Sigmoid colon (tissue), 7 donors: ENCODE measurements at regions of chr7 and their contacts with region 1.

Region 1: GRCh38 chr7:131107337-131108211 is 220.1 kb upstream of the MKLN1 start:
- DNase-seq: peak; percentile 91
- H3K4me3 ChIP-seq: peak overlapping the region; percentile 78 to 99 (median 90)
- H3K27ac ChIP-seq: peak overlapping the region; percentile 95 to 100 (median 98)
- H3K4me1 ChIP-seq: peaks cover 0 to 61% (median 55%) of the 10 kb centered on the region in 4 donors
- H3K27me3 ChIP-seq: no peaks in the 10 kb centered on the region
- CTCF ChIP-seq: no peak
- EP300 ChIP-seq: peak in 1 of 4 donors; percentile 25
- POLR2A ChIP-seq: peak; percentile 67 to 80

Region 2: DNA sequence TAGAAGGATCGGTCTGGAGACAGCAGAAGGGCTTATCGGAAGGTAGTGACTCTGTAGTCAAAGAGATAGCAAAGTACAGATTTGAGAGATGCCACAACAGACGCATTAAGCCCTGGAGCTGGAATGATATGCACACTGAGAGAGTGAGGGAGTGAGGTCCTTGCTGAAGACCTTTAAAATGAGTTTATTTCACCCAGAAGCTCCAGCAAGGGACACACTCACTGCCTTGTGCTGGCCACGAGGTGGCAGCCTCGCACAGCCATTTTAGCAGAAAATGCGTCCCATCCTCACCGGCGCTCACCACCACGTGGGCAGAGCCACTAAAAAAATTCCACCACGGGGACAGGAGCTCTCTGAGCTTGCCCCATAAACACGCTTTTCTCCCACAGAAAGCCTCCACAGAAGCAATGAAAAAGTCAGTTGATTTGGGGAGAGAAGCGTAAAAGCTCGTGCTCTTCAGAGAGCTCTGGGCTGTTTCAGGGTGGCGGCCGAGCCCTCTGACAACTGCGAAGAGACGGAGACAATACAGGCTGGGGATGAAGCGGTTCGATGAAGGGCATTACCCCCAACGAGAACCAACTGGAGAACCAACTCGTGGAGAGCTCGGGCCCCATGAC is 210.6 kb before region 1 on chr7:
- intact Hi-C with region 1: loop called (anchors 5 kb)
- DNase-seq: peak; percentile 81
- H3K4me3 ChIP-seq: no peak overlapping the region
- H3K27ac ChIP-seq: peak overlapping the region in 3 of 4 donors; percentile 15 to 65 (median 17)
- H3K4me1 ChIP-seq: peaks cover 0 to 79% (median 71%) of the 10 kb centered on the region in 4 donors
- H3K27me3 ChIP-seq: no peaks in the 10 kb centered on the region
- CTCF ChIP-seq: peak; percentile 64 to 82 (median 75)
- EP300 ChIP-seq: no peak
- POLR2A ChIP-seq: no peak

Region 3: GRCh38 chr7:131071786-131072504 is 35.6 kb before region 1 on chr7:
- intact Hi-C with region 1: loop called (anchors 5 kb)
- DNase-seq: no peak
- H3K4me3 ChIP-seq: no peak overlapping the region
- H3K27ac ChIP-seq: peak overlapping the region in 3 of 4 donors; percentile 49 to 54 (median 53)
- H3K4me1 ChIP-seq: peaks cover 0 to 88% (median 59%) of the 10 kb centered on the region in 4 donors
- H3K27me3 ChIP-seq: no peaks in the 10 kb centered on the region
- CTCF ChIP-seq: peak in 2 of 4 experiments; percentile 6 to 14
- EP300 ChIP-seq: no peak
- POLR2A ChIP-seq: no peak

Region 4: GRCh38 chr7:131219312-131220041 is 111.9 kb after region 1 on chr7:
- intact Hi-C with region 1: loop called (anchors 5 kb)
- DNase-seq: peak; percentile 89
- H3K4me3 ChIP-seq: no peak overlapping the region
- H3K27ac ChIP-seq: peak overlapping the region; percentile 48 to 66 (median 59)
- H3K4me1 ChIP-seq: peaks cover 0 to 10% (median 4%) of the 10 kb centered on the region in 4 donors
- H3K27me3 ChIP-seq: no peaks in the 10 kb centered on the region
- CTCF ChIP-seq: no peak
- EP300 ChIP-seq: no peak
- POLR2A ChIP-seq: no peak

Region 5: GRCh38 chr7:131327626-131328376 is 220.2 kb after region 1 on chr7 and contains the start of gene MKLN1:
- intact Hi-C with region 1: loop called (anchors 2 kb)
- DNase-seq: peak; percentile 96
- H3K4me3 ChIP-seq: peak within 1 kb of the TSS; percentile 87 to 99 (median 94)
- H3K27ac ChIP-seq: peak within 1 kb of the TSS; percentile 97 to 100 (median 98)
- H3K4me1 ChIP-seq: peaks cover 0 to 35% (median 20%) of the 10 kb centered on the region in 4 donors
- H3K27me3 ChIP-seq: no peaks in the 10 kb centered on the region
- CTCF ChIP-seq: no peak
- EP300 ChIP-seq: peak in 2 of 4 donors; percentile 4 to 36
- POLR2A ChIP-seq: peak; percentile 54 to 70
- total RNA-seq, gene MKLN1: 48.2 to 68.1 (median 61.0) TPM

Region 6: DNA sequence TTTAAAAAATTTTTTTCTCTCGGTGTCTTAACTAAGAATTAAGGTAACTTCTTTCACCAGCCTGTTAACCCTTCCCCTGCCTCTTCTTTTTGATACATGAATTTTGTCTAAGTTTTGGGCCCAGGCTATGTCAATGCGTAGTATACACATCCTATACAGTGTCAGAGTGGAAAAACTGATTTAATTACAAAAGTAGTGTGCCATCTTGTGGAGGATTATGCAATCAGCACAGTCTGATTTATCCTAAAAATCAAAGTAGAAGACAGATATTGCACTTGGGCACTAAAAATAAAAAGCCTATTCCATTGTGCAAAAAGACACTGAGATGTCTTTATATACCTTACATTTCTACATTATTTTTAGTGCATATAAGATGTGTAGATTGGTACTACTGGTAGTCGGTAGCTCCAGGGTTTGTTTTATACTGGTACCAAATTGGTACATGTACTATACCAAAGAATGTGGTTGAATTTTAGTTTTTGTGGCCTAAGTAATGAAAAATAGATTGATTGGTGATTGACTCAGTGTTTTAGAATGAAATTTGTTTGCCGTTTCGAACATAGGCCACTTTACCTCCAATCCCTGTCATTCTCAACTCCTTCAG is 316.7 kb after region 1 on chr7:
- intact Hi-C with region 1: loop called (anchors 5 kb)
- DNase-seq: no peak
- H3K4me3 ChIP-seq: no peak overlapping the region
- H3K27ac ChIP-seq: peak overlapping the region; percentile 12 to 49 (median 14)
- H3K4me1 ChIP-seq: peaks cover 0 to 26% (median 15%) of the 10 kb centered on the region in 4 donors
- H3K27me3 ChIP-seq: no peaks in the 10 kb centered on the region
- CTCF ChIP-seq: peak in 3 of 4 experiments; percentile 30 to 60 (median 51)
- EP300 ChIP-seq: no peak
- POLR2A ChIP-seq: no peak